CD8-positive, alpha-beta T cell (primary cell): ENCODE measurements at regions of chr19 and their contacts with region 1.

Region 1: GRCh38 chr19:32971715-32972540 is at the starts of genes CEP89 and FAAP24:
- DNase-seq: peak; percentile 96 to 99 (median 98)
- ATAC-seq: peak; percentile 98
- H3K4me3 ChIP-seq: peak within 1 kb of the TSS; percentile 87 to 90
- H3K4me3 Mint-ChIP-seq: peak within 1 kb of the TSS; percentile 99
- H3K27ac ChIP-seq: peak within 1 kb of the TSS; percentile 68 to 93
- H3K27ac Mint-ChIP-seq: peak within 1 kb of the TSS; percentile 98
- H3K4me1 ChIP-seq: peaks cover 10% of the 10 kb centered on the region
- H3K4me1 Mint-ChIP-seq: peaks cover 24% of the 10 kb centered on the region
- H3K27me3 ChIP-seq: no peaks in the 10 kb centered on the region
- H3K27me3 Mint-ChIP-seq: no peaks in the 10 kb centered on the region
- CTCF ChIP-seq: no peak
- total RNA-seq, gene CEP89: 3.0 to 5.5 TPM
- total RNA-seq, gene FAAP24: 0.69 to 1.2 TPM

Region 2: DNA sequence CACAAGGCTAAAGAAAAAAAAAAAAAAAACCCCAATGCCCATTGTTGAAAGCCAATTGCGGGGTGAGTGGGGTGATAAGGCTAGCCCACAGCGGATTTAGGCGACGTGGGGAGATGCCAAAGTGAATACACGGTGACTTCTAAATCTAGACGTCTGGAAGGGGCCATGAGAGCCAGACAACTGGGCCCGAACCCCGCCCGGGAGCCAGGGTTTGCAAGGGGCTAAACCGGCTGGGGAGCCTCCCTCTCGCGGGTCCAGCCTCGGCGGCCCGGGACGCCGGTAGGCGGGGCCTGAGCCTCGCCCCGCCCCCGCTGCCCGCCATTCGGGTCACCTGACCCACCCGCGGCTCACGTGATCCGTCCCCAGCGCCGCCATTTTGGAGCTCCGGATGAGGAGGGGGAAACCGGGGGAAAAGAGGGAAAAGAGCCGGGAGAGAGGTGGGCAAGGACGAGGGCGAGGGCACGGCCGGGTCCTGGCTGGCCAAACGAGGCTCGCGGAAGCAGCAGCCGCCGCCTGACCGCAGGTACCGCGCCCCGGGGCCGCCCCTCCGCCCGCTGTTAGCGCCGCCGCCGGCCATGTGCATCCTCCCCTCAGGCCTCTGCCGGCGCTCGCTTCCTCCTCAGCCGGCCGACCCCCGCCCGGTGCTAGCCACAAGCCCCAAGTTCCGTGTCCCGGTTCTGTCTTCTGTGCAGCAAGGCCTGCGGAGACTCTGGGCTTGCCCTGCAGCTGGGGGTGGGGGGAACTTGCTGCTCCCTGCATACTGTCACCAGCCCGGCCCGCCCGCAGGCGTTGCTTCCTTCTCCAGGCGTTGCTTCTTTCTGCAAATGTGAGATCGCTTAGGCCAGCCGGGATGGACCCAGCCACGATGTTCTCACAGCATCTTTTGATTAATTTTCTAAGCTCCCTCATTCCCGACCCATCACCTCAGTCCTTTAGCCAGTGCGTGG is 626.4 kb before region 1 on chr19 and contains the start of gene ZNF507:
- CTCF ChIA-PET with region 1: no interaction called
- POLR2A ChIA-PET with region 1: no interaction called
- intact Hi-C with region 1: loop called in 1 of 2 experiments (anchors 10 kb)
- DNase-seq: peak; percentile 58 to 88 (median 80)
- ATAC-seq: peak; percentile 78
- H3K4me3 ChIP-seq: peak within 1 kb of the TSS; percentile 69 to 91
- H3K4me3 Mint-ChIP-seq: peak within 1 kb of the TSS; percentile 95
- H3K27ac ChIP-seq: peak within 1 kb of the TSS; percentile 68 to 75
- H3K27ac Mint-ChIP-seq: peak within 1 kb of the TSS; percentile 97
- H3K4me1 ChIP-seq: peaks cover 39% of the 10 kb centered on the region
- H3K4me1 Mint-ChIP-seq: peaks cover 42% of the 10 kb centered on the region
- H3K27me3 ChIP-seq: no peaks in the 10 kb centered on the region
- H3K27me3 Mint-ChIP-seq: no peaks in the 10 kb centered on the region
- CTCF ChIP-seq: no peak
- total RNA-seq, gene ZNF507: 28.4 to 29.6 TPM

Region 3: GRCh38 chr19:32580901-32581703 is 390.8 kb before region 1 on chr19 and contains the start of gene PDCD5:
- CTCF ChIA-PET with region 1: no interaction called
- POLR2A ChIA-PET with region 1: no interaction called
- intact Hi-C with region 1: loop called (anchors 1 to 2 kb)
- DNase-seq: peak; percentile 96 to 98 (median 97)
- ATAC-seq: peak; percentile 93
- H3K4me3 ChIP-seq: peak within 1 kb of the TSS; percentile 66 to 87
- H3K4me3 Mint-ChIP-seq: peak within 1 kb of the TSS; percentile 95
- H3K27ac ChIP-seq: peak within 1 kb of the TSS; percentile 57 to 70
- H3K27ac Mint-ChIP-seq: peak within 1 kb of the TSS; percentile 93
- H3K4me1 ChIP-seq: peaks cover 21% of the 10 kb centered on the region
- H3K4me1 Mint-ChIP-seq: peaks cover 35% of the 10 kb centered on the region
- H3K27me3 ChIP-seq: peaks cover 0 to 3% of the 10 kb centered on the region in 2 experiments
- H3K27me3 Mint-ChIP-seq: no peaks in the 10 kb centered on the region
- CTCF ChIP-seq: no peak
- total RNA-seq, gene PDCD5: 24.9 to 26.6 TPM

Region 4: GRCh38 chr19:32691291-32691951 is 280.5 kb before region 1 on chr19 and contains the start of gene NUDT19:
- CTCF ChIA-PET with region 1: no interaction called
- POLR2A ChIA-PET with region 1: no interaction called
- intact Hi-C with region 1: loop called (anchors 1 to 5 kb)
- DNase-seq: peak; percentile 53 to 85 (median 75)
- ATAC-seq: peak; percentile 79
- H3K4me3 ChIP-seq: peak within 1 kb of the TSS; percentile 60 to 79
- H3K4me3 Mint-ChIP-seq: peak within 1 kb of the TSS; percentile 92
- H3K27ac ChIP-seq: peak within 1 kb of the TSS; percentile 35 to 74
- H3K27ac Mint-ChIP-seq: peak within 1 kb of the TSS; percentile 90
- H3K4me1 ChIP-seq: peaks cover 35% of the 10 kb centered on the region
- H3K4me1 Mint-ChIP-seq: peaks cover 52% of the 10 kb centered on the region
- H3K27me3 ChIP-seq: no peaks in the 10 kb centered on the region
- H3K27me3 Mint-ChIP-seq: no peaks in the 10 kb centered on the region
- CTCF ChIP-seq: no peak
- total RNA-seq, gene NUDT19: 15.3 to 18.0 TPM

Region 5: GRCh38 chr19:32830231-32831014 is 141.5 kb before region 1 on chr19:
- CTCF ChIA-PET with region 1: no interaction called
- POLR2A ChIA-PET with region 1: no interaction called
- intact Hi-C with region 1: no loop called
- DNase-seq: no peak
- ATAC-seq: no peak
- H3K4me3 ChIP-seq: no peak overlapping the region
- H3K4me3 Mint-ChIP-seq: no peak overlapping the region
- H3K27ac ChIP-seq: no peak overlapping the region
- H3K27ac Mint-ChIP-seq: no peak overlapping the region
- H3K4me1 ChIP-seq: no peaks in the 10 kb centered on the region
- H3K4me1 Mint-ChIP-seq: peaks cover 2% of the 10 kb centered on the region
- H3K27me3 ChIP-seq: no peaks in the 10 kb centered on the region
- H3K27me3 Mint-ChIP-seq: no peaks in the 10 kb centered on the region
- CTCF ChIP-seq: no peak

Region 6: GRCh38 chr19:33080761-33081681 is 109.1 kb after region 1 on chr19 and contains the start of gene GPATCH1:
- CTCF ChIA-PET with region 1: interaction called, 3 read pairs
- POLR2A ChIA-PET with region 1: no interaction called
- intact Hi-C with region 1: loop called (anchors 1 kb)
- DNase-seq: peak; percentile 66 to 89 (median 81)
- ATAC-seq: peak; percentile 96
- H3K4me3 ChIP-seq: peak within 1 kb of the TSS; percentile 76 to 79
- H3K4me3 Mint-ChIP-seq: peak within 1 kb of the TSS; percentile 96
- H3K27ac ChIP-seq: peak within 1 kb of the TSS; percentile 62 to 80
- H3K27ac Mint-ChIP-seq: peak within 1 kb of the TSS; percentile 97
- H3K4me1 ChIP-seq: peaks cover 9% of the 10 kb centered on the region
- H3K4me1 Mint-ChIP-seq: peaks cover 30% of the 10 kb centered on the region
- H3K27me3 ChIP-seq: no peaks in the 10 kb centered on the region
- H3K27me3 Mint-ChIP-seq: no peaks in the 10 kb centered on the region
- CTCF ChIP-seq: no peak
- total RNA-seq, gene GPATCH1: 4.9 to 5.2 TPM

Region 7: GRCh38 chr19:33125929-33126388 is 154.0 kb after region 1 on chr19:
- CTCF ChIA-PET with region 1: interaction called, 15 read pairs
- POLR2A ChIA-PET with region 1: no interaction called
- intact Hi-C with region 1: no loop called
- DNase-seq: peak; percentile 9 to 79 (median 57)
- ATAC-seq: peak; percentile 97
- H3K4me3 ChIP-seq: no peak overlapping the region
- H3K4me3 Mint-ChIP-seq: no peak overlapping the region
- H3K27ac ChIP-seq: no peak overlapping the region
- H3K27ac Mint-ChIP-seq: no peak overlapping the region
- H3K4me1 ChIP-seq: no peaks in the 10 kb centered on the region
- H3K4me1 Mint-ChIP-seq: peaks cover 6% of the 10 kb centered on the region
- H3K27me3 ChIP-seq: no peaks in the 10 kb centered on the region
- H3K27me3 Mint-ChIP-seq: no peaks in the 10 kb centered on the region
- CTCF ChIP-seq: peak; percentile 71

Region 8: GRCh38 chr19:33406521-33407139 is 434.7 kb after region 1 on chr19:
- CTCF ChIA-PET with region 1: interaction called, 3 read pairs
- POLR2A ChIA-PET with region 1: no interaction called
- intact Hi-C with region 1: loop called in 1 of 2 experiments (anchors 2 kb)
- DNase-seq: peak; percentile 54 to 86 (median 74)
- ATAC-seq: peak; percentile 80
- H3K4me3 ChIP-seq: no peak overlapping the region
- H3K4me3 Mint-ChIP-seq: no peak overlapping the region
- H3K27ac ChIP-seq: no peak overlapping the region
- H3K27ac Mint-ChIP-seq: no peak overlapping the region
- H3K4me1 ChIP-seq: no peaks in the 10 kb centered on the region
- H3K4me1 Mint-ChIP-seq: no peaks in the 10 kb centered on the region
- H3K27me3 ChIP-seq: no peaks in the 10 kb centered on the region
- H3K27me3 Mint-ChIP-seq: no peaks in the 10 kb centered on the region
- CTCF ChIP-seq: peak; percentile 86